Activated B cell treated with CpG ODN at 0.5 μM for 24 hours (primary cell): ENCODE measurements at regions of chr11 and their contacts with region 1.

Region 1: GRCh38 chr11:111399187-111400031 is 20.3 kb upstream of the POU2AF1 start:
- DNase-seq: no peak
- ATAC-seq: peak; percentile 54
- H3K4me3 Mint-ChIP-seq: peak overlapping the region; percentile 82
- H3K27ac Mint-ChIP-seq: peak overlapping the region; percentile 88
- H3K4me1 Mint-ChIP-seq: peaks cover 88% of the 10 kb centered on the region
- H3K27me3 Mint-ChIP-seq: no peaks in the 10 kb centered on the region
- CTCF ChIP-seq: no peak

Region 2: DNA sequence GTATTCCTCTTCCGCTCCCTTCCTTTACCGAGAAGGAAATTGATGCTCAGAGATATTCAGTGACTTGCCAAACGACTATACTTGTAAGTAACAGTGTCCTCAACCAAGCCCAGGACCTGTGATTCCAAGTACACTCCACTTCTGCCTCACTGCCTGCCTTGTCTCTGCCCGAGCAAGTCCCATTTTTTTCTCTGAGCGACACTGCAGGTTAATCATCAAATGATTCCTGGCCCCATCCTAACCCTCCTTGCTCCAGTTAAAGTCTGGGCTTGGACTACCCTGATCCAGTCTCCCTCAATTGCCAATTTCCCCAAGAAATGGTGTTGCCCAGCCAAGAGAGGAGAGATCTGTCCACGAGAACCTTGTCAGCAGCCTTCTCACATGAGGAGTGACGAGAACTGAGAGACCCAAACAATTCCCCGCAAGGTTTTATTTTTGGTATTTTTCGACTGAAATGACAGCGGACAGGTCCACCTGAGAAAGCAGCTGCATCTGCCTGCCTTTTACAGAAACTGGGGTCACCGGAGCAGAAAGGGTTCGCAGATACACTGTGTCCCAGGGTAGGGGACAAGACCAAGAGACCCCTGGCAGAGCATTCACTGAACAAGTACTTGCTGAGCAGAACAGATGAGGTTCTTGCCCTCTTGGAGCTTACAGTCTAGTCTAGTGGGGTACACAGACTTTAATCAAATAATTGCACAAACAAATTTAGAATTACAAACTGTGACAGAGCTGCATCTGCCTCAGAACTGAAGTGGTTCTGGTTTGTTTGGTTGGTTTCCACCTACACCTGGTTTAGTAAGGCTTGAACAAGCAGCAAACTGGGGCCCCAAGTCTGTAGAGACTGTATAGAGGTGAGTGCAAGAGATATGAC is 31.8 kb before region 1 on chr11:
- CTCF ChIA-PET with region 1: no interaction called
- POLR2A ChIA-PET with region 1: interaction called, 11 read pairs
- intact Hi-C with region 1: no loop called
- DNase-seq: no peak
- ATAC-seq: peak; percentile 51
- H3K4me3 Mint-ChIP-seq: peak overlapping the region; percentile 67
- H3K27ac Mint-ChIP-seq: peak overlapping the region; percentile 98
- H3K4me1 Mint-ChIP-seq: no peaks in the 10 kb centered on the region
- H3K27me3 Mint-ChIP-seq: no peaks in the 10 kb centered on the region
- CTCF ChIP-seq: no peak

Region 3: GRCh38 chr11:111387363-111387762 is 12.0 kb before region 1 on chr11:
- CTCF ChIA-PET with region 1: interaction called, 5 read pairs
- POLR2A ChIA-PET with region 1: interaction called, 11 read pairs
- intact Hi-C with region 1: no loop called
- DNase-seq: no peak
- ATAC-seq: no peak
- H3K4me3 Mint-ChIP-seq: no peak overlapping the region
- H3K27ac Mint-ChIP-seq: no peak overlapping the region
- H3K4me1 Mint-ChIP-seq: peaks cover 56% of the 10 kb centered on the region
- H3K27me3 Mint-ChIP-seq: no peaks in the 10 kb centered on the region
- CTCF ChIP-seq: no peak